Vagina (tissue), 2 donors: ENCODE measurements at regions of chr7 and their contacts with region 1.

Region 1: DNA sequence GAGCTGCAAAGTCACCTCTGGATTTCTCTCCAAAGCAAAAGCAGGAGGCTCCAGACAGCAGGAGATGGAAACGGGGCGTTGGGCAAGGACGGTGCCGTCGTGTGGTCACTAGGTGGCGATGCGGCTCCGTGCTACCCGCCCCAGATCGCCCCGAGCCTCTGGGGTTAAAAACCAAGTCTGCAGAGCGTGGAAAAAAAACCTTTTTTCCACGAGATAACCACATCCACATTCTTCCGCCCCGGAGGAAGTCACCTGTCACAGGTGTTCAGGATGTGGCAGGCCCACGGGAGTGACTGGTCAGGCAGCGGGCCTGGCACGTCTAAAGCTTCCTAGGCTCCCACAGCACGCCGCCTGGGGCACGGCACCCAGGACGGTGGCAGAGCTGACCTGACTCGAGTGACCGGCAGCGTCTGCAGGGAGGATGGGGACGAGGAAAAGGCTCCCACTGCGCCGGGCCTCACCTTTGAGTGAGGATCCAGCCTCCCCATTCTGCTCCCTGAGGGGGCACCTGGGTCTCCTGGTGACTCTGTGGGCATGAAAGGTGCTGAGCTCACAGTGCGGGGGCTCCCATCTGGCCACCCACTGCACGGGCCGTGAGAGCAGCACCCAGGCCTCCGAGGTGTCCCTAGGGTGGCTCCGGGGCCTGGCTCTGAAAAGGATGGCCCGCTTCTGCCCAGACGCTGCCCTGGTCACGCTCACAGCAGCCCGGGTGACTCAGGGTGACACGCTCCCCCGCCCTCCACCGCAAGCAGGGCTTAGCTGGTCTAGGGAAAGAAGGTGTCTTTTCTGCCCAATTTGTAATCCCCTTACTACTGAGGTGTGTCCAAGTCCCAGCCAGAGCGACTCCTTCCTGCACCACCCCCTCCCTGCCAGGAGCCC is 71.3 kb upstream of the TNRC18 start:
- DNase-seq: no peak
- H3K4me3 ChIP-seq: peak overlapping the region; percentile 10 to 38
- H3K27ac ChIP-seq: peak overlapping the region; percentile 15
- H3K4me1 ChIP-seq: peaks cover 27% of the 10 kb centered on the region
- H3K27me3 ChIP-seq: no peaks in the 10 kb centered on the region
- CTCF ChIP-seq: peak; percentile 84 to 89 (median 87)
- POLR2A ChIP-seq: no peak

Region 2: GRCh38 chr7:5661942-5662341 is 167.0 kb after region 1 on chr7:
- intact Hi-C with region 1: loop called (anchors 5 kb)
- DNase-seq: no peak
- H3K4me3 ChIP-seq: no peak overlapping the region
- H3K27ac ChIP-seq: no peak overlapping the region
- H3K4me1 ChIP-seq: peaks cover 8% of the 10 kb centered on the region
- H3K27me3 ChIP-seq: no peaks in the 10 kb centered on the region
- CTCF ChIP-seq: no peak
- POLR2A ChIP-seq: no peak

Region 3: GRCh38 chr7:5704534-5704922 is 209.6 kb after region 1 on chr7:
- intact Hi-C with region 1: loop called (anchors 10 kb)
- DNase-seq: no peak
- H3K4me3 ChIP-seq: no peak overlapping the region
- H3K27ac ChIP-seq: peak overlapping the region; percentile 24
- H3K4me1 ChIP-seq: peaks cover 10% of the 10 kb centered on the region
- H3K27me3 ChIP-seq: no peaks in the 10 kb centered on the region
- CTCF ChIP-seq: peak; percentile 70 to 91 (median 83)
- POLR2A ChIP-seq: no peak